ENCODE measurements at regions of chr12 and their contacts with region 1.

Region 1: GRCh38 chr12:54759751-54760150 is 94.6 kb upstream of the MUCL1 start:
- DNase-seq: peak; percentile 7
- ATAC-seq: peak; percentile 86
- H3K4me3 ChIP-seq: no peak overlapping the region
- H3K27ac ChIP-seq: no peak overlapping the region
- H3K4me1 ChIP-seq: no peaks in the 10 kb centered on the region
- H3K27me3 ChIP-seq: no peaks in the 10 kb centered on the region
- CTCF ChIP-seq: peak; percentile 34 to 48 (median 39); a peak in 5 of 6 replicates
- EP300 ChIP-seq: no peak
- POLR2A ChIP-seq: no peak
- RAD21 ChIP-seq: peak; percentile 72

Region 2: GRCh38 chr12:54509617-54510016 is 250.1 kb before region 1 on chr12:
- CTCF ChIA-PET with region 1: no interaction called
- POLR2A ChIA-PET with region 1: no interaction called
- RAD21 ChIA-PET with region 1: no interaction called
- SMC1A ChIA-PET with region 1: no interaction called
- in situ Hi-C with region 1: no loop called
- intact Hi-C with region 1: no loop called
- DNase-seq: no peak
- ATAC-seq: no peak
- H3K4me3 ChIP-seq: no peak overlapping the region
- H3K27ac ChIP-seq: no peak overlapping the region
- H3K4me1 ChIP-seq: no peaks in the 10 kb centered on the region
- H3K27me3 ChIP-seq: no peaks in the 10 kb centered on the region
- CTCF ChIP-seq: no peak
- EP300 ChIP-seq: no peak
- POLR2A ChIP-seq: no peak
- RAD21 ChIP-seq: no peak

Region 3: DNA sequence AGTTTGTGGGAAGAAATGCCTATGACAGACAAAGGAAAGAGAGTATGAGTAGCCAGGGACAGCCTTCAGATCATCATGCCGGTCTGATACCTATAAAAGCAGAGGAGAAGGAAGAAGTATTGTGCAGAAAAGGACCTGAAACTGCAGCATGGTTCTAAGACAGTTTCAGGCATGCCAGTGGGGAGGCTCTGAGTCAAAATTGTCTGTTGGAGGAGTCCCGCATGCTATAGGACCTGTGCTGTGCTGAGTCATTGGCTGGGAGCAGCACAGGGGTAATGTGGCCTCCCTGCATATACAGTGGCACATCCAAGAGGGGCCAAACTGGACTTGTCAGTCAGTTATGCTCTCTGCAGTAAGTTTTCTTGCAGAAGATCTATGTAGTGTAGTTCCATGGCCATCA is 300.7 kb after region 1 on chr12:
- CTCF ChIA-PET with region 1: interaction called, 3 read pairs
- POLR2A ChIA-PET with region 1: no interaction called
- RAD21 ChIA-PET with region 1: no interaction called
- SMC1A ChIA-PET with region 1: no interaction called
- in situ Hi-C with region 1: loop called (anchors 5 kb)
- intact Hi-C with region 1: no loop called
- DNase-seq: peak; percentile 61
- ATAC-seq: peak; percentile 100
- H3K4me3 ChIP-seq: no peak overlapping the region
- H3K27ac ChIP-seq: no peak overlapping the region
- H3K4me1 ChIP-seq: peaks cover 12% of the 10 kb centered on the region
- H3K27me3 ChIP-seq: no peaks in the 10 kb centered on the region; a peak in 1 of 4 replicates
- CTCF ChIP-seq: no peak
- EP300 ChIP-seq: no peak; a peak in 1 of 4 replicates
- POLR2A ChIP-seq: no peak
- RAD21 ChIP-seq: no peak